ENCODE measurements at regions of chr17 and their contacts with region 1.

Region 1: DNA sequence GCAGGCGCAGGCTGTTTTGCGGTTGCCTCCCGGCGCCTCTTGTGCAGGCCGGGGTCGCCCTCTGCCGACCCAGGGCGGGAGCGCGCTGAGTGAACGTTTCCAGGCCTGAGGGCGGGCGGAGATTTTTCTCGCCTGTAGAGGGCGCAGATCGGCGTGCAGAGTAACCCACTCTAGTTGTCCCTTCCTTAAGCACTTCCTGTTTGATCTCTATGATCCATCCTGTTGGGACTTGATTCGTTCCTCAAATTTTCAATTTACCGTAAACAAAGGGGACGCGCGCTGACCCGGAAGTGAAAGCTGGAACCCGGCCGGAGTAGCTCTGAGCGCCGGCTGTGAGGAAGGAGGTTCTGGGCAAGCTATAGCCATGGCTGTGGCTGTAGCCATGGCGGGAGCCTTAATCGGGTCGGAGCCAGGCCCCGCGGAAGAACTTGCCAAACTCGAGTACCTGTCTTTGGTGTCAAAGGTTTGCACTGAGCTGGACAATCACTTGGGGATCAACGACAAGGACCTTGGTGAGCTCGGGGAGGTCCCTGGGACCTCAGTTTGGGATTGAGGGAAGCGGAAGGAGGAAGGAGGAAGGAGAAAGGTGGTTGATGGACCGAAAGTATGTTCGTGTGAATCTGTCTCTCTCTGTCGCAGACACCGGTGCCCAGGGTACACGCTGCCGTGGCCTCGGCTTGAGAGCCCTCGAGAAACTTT is at the start of gene DHX8:
- DNase-seq: peak; percentile 97 to 98
- H3K4me3 ChIP-seq: peak within 1 kb of the TSS; percentile 64
- H3K4me3 Mint-ChIP-seq: peak within 1 kb of the TSS; percentile 98
- H3K27ac Mint-ChIP-seq: peak within 1 kb of the TSS; percentile 99
- H3K4me1 ChIP-seq: peaks cover 29% of the 10 kb centered on the region
- H3K4me1 Mint-ChIP-seq: peaks cover 13% of the 10 kb centered on the region
- H3K27me3 ChIP-seq: no peaks in the 10 kb centered on the region
- H3K27me3 Mint-ChIP-seq: no peaks in the 10 kb centered on the region
- CTCF ChIP-seq: peak; percentile 100
- total RNA-seq, gene DHX8: 56.3 and 66.8 TPM in 2 replicates

Region 2: GRCh38 chr17:43309505-43310332 is 174.1 kb before region 1 on chr17:
- CTCF ChIA-PET with region 1: no interaction called
- POLR2A ChIA-PET with region 1: no interaction called
- intact Hi-C with region 1: no loop called
- DNase-seq: peak in 1 of 2 experiments; percentile 18
- H3K4me3 ChIP-seq: no peak overlapping the region
- H3K4me3 Mint-ChIP-seq: no peak overlapping the region
- H3K27ac Mint-ChIP-seq: no peak overlapping the region
- H3K4me1 ChIP-seq: no peaks in the 10 kb centered on the region
- H3K4me1 Mint-ChIP-seq: no peaks in the 10 kb centered on the region
- H3K27me3 ChIP-seq: no peaks in the 10 kb centered on the region
- H3K27me3 Mint-ChIP-seq: no peaks in the 10 kb centered on the region
- CTCF ChIP-seq: no peak

Region 3: DNA sequence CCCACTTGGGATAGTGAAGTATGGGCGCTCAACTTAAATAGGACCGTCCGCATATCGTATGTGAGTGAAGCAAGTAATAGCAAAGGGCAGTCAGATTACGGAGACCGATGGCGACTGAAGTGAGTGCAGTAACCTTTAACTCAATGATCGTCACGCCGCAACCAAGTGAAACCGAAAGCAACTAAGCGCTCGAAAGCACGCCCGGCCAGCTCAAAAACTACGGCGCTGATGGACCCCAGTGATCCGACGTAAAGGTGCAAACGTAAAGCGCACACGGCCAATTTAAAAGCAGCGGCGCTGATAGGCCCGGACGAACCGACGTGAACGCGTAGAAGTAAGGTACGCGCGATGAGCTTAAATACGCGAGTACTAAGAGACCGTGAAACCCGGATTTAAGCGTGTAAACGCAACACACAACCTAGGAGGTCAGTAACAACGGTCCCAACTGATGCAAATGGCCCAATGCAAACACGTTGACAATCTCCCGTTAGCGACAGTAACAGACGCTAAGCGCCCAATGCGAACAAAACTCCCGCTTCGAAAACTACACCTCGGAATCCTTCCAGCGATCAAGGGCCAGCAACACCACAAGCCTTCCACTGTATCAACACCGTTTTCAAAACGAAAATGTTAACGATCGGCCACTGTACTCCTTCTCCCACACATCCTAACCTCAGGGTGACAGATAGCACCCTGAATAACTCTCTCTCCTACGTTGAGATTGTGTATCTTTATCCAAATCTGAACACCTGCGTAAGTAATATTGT is 122.9 kb before region 1 on chr17:
- CTCF ChIA-PET with region 1: interaction called, 27 read pairs
- POLR2A ChIA-PET with region 1: interaction called, 39 read pairs
- intact Hi-C with region 1: no loop called
- DNase-seq: peak; percentile 95 to 99
- H3K4me3 ChIP-seq: peak overlapping the region; percentile 36
- H3K4me3 Mint-ChIP-seq: peak overlapping the region; percentile 70
- H3K27ac Mint-ChIP-seq: peak overlapping the region; percentile 99
- H3K4me1 ChIP-seq: peaks cover 14% of the 10 kb centered on the region
- H3K4me1 Mint-ChIP-seq: peaks cover 31% of the 10 kb centered on the region
- H3K27me3 ChIP-seq: no peaks in the 10 kb centered on the region
- H3K27me3 Mint-ChIP-seq: peaks cover 2% of the 10 kb centered on the region
- CTCF ChIP-seq: no peak

Region 4: DNA sequence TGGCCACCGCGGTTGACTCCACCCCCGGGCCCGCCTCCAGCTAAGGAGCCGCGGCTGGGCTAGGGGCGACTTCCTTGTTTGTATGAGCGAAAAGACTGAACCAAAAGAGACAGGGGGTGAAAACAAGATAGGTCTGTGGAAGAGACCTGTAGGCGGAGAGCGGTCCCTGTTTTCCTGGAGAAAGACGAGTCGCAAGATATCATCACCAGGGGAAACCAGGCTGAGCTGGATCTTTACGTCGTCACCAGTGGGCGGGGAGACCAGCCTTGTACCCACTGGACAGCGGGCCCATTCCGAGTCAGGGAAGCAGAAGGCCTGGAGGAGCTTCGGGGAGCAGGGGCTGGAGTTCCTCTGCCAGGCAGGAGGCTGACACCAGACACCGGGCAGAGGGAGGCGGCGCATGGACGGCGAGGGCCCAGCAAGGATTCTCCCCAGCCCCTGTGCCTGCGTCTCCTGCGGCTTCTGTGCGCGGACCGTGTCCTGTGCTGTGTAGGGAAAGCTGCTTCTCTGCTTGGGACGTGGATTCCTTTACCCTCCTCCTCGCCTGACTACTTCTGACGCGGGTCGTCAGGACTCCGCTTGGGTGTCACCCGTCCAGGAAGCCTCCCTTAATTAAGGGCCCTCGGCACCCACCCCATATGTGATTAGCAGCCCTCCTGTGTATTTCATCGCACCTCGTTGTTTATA is 95.3 kb before region 1 on chr17:
- CTCF ChIA-PET with region 1: interaction called, 211 read pairs
- POLR2A ChIA-PET with region 1: interaction called, 30 read pairs
- intact Hi-C with region 1: no loop called
- DNase-seq: peak; percentile 93 to 96
- H3K4me3 ChIP-seq: peak overlapping the region; percentile 72
- H3K4me3 Mint-ChIP-seq: peak overlapping the region; percentile 87
- H3K27ac Mint-ChIP-seq: peak overlapping the region; percentile 96
- H3K4me1 ChIP-seq: peaks cover 19% of the 10 kb centered on the region; the same call in 1 of the 2 replicates
- H3K4me1 Mint-ChIP-seq: peaks cover 25% of the 10 kb centered on the region
- H3K27me3 ChIP-seq: no peaks in the 10 kb centered on the region
- H3K27me3 Mint-ChIP-seq: no peaks in the 10 kb centered on the region
- CTCF ChIP-seq: no peak

Region 5: GRCh38 chr17:43406676-43407645 is 76.9 kb before region 1 on chr17:
- CTCF ChIA-PET with region 1: interaction called, 13 read pairs
- POLR2A ChIA-PET with region 1: no interaction called
- intact Hi-C with region 1: no loop called
- DNase-seq: no peak
- H3K4me3 ChIP-seq: no peak overlapping the region
- H3K4me3 Mint-ChIP-seq: no peak overlapping the region
- H3K27ac Mint-ChIP-seq: peak overlapping the region; percentile 95
- H3K4me1 ChIP-seq: peaks cover 24% of the 10 kb centered on the region
- H3K4me1 Mint-ChIP-seq: peaks cover 39% of the 10 kb centered on the region
- H3K27me3 ChIP-seq: no peaks in the 10 kb centered on the region
- H3K27me3 Mint-ChIP-seq: no peaks in the 10 kb centered on the region
- CTCF ChIP-seq: no peak

Region 6: GRCh38 chr17:43449470-43450248 is 34.2 kb before region 1 on chr17:
- CTCF ChIA-PET with region 1: interaction called, 15 read pairs
- POLR2A ChIA-PET with region 1: interaction called, 5 read pairs
- intact Hi-C with region 1: no loop called
- DNase-seq: peak; percentile 48 to 60
- H3K4me3 ChIP-seq: no peak overlapping the region
- H3K4me3 Mint-ChIP-seq: no peak overlapping the region
- H3K27ac Mint-ChIP-seq: peak overlapping the region; percentile 13
- H3K4me1 ChIP-seq: peaks cover 16% of the 10 kb centered on the region
- H3K4me1 Mint-ChIP-seq: peaks cover 13% of the 10 kb centered on the region
- H3K27me3 ChIP-seq: no peaks in the 10 kb centered on the region
- H3K27me3 Mint-ChIP-seq: no peaks in the 10 kb centered on the region
- CTCF ChIP-seq: no peak

Region 7: DNA sequence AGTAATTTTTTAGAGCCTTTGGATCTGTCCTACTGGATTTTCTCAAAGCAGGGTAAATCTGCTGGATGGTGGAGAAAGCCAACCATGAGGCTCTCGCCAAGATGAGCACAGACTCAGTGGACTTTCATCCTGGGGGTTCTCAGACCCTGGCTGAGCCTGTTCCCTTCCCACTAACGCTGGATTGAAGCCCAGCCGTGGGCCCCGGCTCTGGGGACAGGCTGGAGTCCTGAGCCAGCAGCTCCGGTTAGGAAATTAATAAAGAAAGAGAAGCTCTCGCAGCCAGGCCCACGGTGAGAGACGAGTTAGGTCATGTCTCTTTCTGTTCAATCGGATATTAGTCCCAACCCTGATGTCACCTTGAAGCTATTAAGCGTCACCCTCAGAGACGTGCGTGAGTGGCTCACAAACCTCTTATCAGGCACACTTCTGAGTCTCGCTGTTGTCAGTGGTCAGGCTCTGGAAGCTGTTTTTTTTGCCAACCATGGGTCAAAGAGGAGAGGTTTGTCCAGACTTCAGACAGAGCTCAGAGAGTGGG is 150.8 kb after region 1 on chr17:
- CTCF ChIA-PET with region 1: no interaction called
- POLR2A ChIA-PET with region 1: no interaction called
- intact Hi-C with region 1: no loop called
- DNase-seq: no peak
- H3K4me3 ChIP-seq: no peak overlapping the region
- H3K4me3 Mint-ChIP-seq: no peak overlapping the region
- H3K27ac Mint-ChIP-seq: no peak overlapping the region
- H3K4me1 ChIP-seq: peaks cover 47% of the 10 kb centered on the region
- H3K4me1 Mint-ChIP-seq: peaks cover 33% of the 10 kb centered on the region
- H3K27me3 ChIP-seq: no peaks in the 10 kb centered on the region
- H3K27me3 Mint-ChIP-seq: no peaks in the 10 kb centered on the region
- CTCF ChIP-seq: no peak

Region 8: GRCh38 chr17:44070455-44071197 is 586.8 kb after region 1 on chr17 and contains the start of gene G6PC3:
- CTCF ChIA-PET with region 1: no interaction called
- POLR2A ChIA-PET with region 1: no interaction called
- intact Hi-C with region 1: no loop called
- DNase-seq: peak; percentile 98 to 99
- H3K4me3 ChIP-seq: peak within 1 kb of the TSS; percentile 89
- H3K4me3 Mint-ChIP-seq: peak within 1 kb of the TSS; percentile 96
- H3K27ac Mint-ChIP-seq: peak within 1 kb of the TSS; percentile 100
- H3K4me1 ChIP-seq: peaks cover 19% of the 10 kb centered on the region
- H3K4me1 Mint-ChIP-seq: peaks cover 15% of the 10 kb centered on the region
- H3K27me3 ChIP-seq: no peaks in the 10 kb centered on the region
- H3K27me3 Mint-ChIP-seq: no peaks in the 10 kb centered on the region
- CTCF ChIP-seq: no peak
- total RNA-seq, gene G6PC3: 60.1 and 64.5 TPM in 2 replicates

Measured in Caco-2 (cell line).